ENCODE measurements at regions of chr10 and their contacts with region 1.

Region 1: GRCh38 chr10:77846718-77847630 is 79.6 kb downstream of the DLG5 start:
- DNase-seq: peak; percentile 98
- ATAC-seq: peak; percentile 68
- H3K4me3 ChIP-seq: no peak overlapping the region
- H3K27ac ChIP-seq: peak overlapping the region; percentile 1
- H3K4me1 ChIP-seq: peaks cover 30% of the 10 kb centered on the region
- H3K27me3 ChIP-seq: no peaks in the 10 kb centered on the region
- CTCF ChIP-seq: peak; percentile 100

Region 2: GRCh38 chr10:77909749-77910375 is 62.9 kb after region 1 on chr10:
- CTCF ChIA-PET with region 1: interaction called, 5 read pairs
- POLR2A ChIA-PET with region 1: no interaction called
- intact Hi-C with region 1: loop called (anchors 5 kb)
- DNase-seq: peak; percentile 78
- ATAC-seq: 0 out of 2 replicates have a peak, but pooled peaks have one; percentile 6
- H3K4me3 ChIP-seq: no peak overlapping the region
- H3K27ac ChIP-seq: peak overlapping the region; percentile 8
- H3K4me1 ChIP-seq: peaks cover 25% of the 10 kb centered on the region
- H3K27me3 ChIP-seq: no peaks in the 10 kb centered on the region
- CTCF ChIP-seq: no peak

Region 3: GRCh38 chr10:77949167-77949566 is 102.2 kb after region 1 on chr10:
- CTCF ChIA-PET with region 1: interaction called, 6 read pairs
- POLR2A ChIA-PET with region 1: no interaction called
- intact Hi-C with region 1: loop called (anchors 1 kb)
- DNase-seq: peak; percentile 100
- ATAC-seq: peak; percentile 94
- H3K4me3 ChIP-seq: peak overlapping the region; percentile 3; the same call in 1 of the 2 replicates
- H3K27ac ChIP-seq: peak overlapping the region; percentile 69
- H3K4me1 ChIP-seq: peaks cover 36% of the 10 kb centered on the region
- H3K27me3 ChIP-seq: no peaks in the 10 kb centered on the region
- CTCF ChIP-seq: no peak

Region 4: GRCh38 chr10:77989081-77989724 is 142.2 kb after region 1 on chr10:
- CTCF ChIA-PET with region 1: interaction called, 17 read pairs
- POLR2A ChIA-PET with region 1: no interaction called
- intact Hi-C with region 1: loop called (anchors 1 kb)
- DNase-seq: peak; percentile 86
- ATAC-seq: peak; percentile 82
- H3K4me3 ChIP-seq: no peak overlapping the region
- H3K27ac ChIP-seq: no peak overlapping the region
- H3K4me1 ChIP-seq: peaks cover 22% of the 10 kb centered on the region
- H3K27me3 ChIP-seq: no peaks in the 10 kb centered on the region
- CTCF ChIP-seq: no peak